AG04449 (cell line): ENCODE measurements at regions of chr20 and their contacts with region 1.

Region 1: DNA sequence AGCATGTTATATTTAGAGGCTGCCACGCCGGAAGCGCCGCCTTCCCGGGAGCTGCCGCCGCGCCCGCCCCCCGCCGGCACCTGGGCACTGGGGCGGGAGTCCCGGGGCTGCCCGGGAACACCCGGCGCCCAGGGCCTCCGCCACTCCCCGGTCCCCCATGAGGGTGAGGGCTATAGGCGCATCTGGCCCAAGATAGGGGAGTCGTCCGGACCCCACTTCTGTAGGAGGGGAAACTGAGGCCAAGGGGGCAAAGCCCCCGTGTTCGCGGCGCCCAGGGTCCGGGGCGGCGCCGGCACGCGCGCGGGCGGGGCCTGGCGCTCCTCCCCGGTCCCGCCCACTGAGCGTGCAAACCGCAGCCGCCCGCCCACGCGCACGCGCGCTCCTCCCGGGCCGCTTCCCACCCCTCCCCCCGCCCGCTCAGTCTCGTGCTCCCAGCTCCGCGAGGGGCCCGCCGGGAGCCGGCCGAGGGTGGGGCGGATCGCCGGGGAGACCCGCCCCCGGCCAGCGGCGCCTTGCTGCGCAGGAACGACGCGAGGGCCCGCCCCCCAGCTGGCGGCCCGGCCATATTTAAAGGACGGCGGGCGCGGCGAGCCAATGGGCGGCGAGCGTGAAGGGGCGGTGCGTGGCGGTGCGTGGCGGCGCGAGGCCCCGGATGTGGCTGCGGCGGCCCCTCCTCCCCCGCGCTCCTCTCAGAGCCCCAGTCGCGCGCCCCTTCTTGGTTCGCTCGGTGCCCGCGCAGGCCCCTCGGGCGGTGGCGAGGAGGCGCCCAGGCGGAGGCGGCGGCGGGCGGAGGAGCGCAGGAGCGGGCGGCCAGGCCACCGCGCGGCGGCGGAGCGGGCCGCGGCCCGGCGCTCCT is at the start of gene LSM14B:
- DNase-seq: peak; percentile 55
- H3K4me3 ChIP-seq: peak within 1 kb of the TSS; percentile 82
- CTCF ChIP-seq: no peak

Region 2: GRCh38 chr20:62047666-62048345 is 74.2 kb before region 1 on chr20:
- CTCF ChIA-PET with region 1: no interaction called
- POLR2A ChIA-PET with region 1: no interaction called
- DNase-seq: no peak
- H3K4me3 ChIP-seq: no peak overlapping the region
- CTCF ChIP-seq: no peak

Region 3: DNA sequence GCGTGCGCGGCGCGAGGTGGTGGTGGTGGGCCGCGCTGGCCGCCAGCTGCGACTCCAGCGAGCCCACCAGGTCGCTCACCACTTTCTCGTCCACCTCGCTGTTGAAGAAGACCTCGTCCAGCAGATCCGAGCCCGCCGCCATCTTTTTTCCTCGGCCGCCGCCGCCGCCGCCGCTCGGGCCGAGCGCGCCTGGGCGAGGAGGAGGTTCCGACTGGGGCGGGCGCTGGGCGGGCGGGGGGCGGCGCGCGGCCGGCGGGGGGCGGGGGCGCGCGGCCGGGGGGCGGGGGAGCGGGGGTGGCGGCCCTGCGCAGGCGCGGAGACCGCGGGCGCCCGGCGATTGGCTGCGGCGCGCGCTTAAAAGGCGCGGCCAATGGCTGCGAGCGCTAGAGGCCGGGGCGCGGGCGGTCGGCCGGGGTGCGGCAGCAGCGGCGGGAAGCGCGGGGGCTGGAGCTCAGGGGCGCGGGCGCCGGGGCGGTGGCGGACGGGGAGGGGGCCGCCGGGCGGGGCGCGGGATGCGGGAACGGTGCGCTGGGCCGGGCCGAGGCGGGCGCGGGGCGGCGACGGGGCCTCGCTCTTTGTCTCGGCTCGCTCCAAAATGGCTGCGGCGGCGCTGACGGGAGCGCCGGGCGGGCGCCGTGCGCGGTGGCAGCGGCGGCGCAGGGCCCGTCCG is 56.2 kb before region 1 on chr20 and contains the start of gene TAF4:
- CTCF ChIA-PET with region 1: interaction called, 3 read pairs
- POLR2A ChIA-PET with region 1: interaction called, 37 read pairs
- DNase-seq: no peak
- H3K4me3 ChIP-seq: peak within 1 kb of the TSS; percentile 64
- CTCF ChIP-seq: no peak

Region 4: GRCh38 chr20:62136283-62137091 is 14.5 kb after region 1 on chr20:
- CTCF ChIA-PET with region 1: interaction called, 30 read pairs
- POLR2A ChIA-PET with region 1: interaction called, 29 read pairs
- DNase-seq: no peak
- H3K4me3 ChIP-seq: no peak overlapping the region
- CTCF ChIP-seq: peak; percentile 81